Esophagus muscularis mucosa (tissue), 4 donors: ENCODE measurements at regions of chr3 and their contacts with region 1.

Region 1: DNA sequence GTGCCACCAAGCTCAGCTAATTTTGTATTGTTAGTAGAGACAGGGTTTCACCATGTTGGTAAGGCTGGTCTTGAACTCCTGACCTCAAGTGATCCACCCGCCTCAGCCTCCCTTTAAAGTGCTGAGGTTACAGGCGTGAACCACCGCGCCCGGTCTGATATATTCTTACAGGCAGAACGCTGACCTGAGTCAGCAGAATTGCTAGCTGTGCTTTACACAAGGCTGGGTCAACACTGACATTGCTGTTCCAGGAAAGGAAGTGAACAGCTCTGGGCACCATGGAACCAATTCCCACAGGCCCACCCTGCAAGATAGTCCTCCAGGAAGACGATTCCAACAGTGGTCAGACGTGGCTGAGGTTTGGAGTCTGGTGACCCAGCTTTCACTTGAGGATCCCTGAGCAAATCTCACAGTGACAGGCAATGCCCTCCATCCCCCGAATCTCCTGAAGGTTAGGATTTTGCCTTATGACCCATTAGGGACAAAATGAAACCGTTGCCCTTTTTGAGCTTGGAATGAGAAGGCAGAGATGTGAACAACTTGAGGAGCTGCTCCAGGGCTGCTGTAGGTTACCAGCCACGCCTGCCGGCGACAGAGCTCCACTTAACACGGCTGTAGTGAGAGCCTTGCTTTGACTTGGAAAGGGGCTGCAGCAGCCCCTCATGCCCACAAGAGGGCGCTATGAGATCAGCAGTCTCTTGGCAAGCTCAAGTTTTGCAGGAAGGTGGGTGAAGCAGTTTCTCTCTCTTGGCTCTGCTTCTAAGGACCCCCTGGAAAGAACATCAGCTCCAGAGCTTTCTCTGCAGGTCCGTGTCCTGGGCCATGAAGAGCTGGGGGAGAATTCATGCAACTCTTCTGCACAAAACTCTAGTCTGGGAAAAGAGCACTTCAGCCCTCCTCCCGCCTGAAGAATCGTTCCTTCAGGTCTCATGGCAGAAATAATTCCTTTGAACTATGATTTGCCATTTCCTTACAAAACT is 74.1 kb downstream of the SENP2 start:
- DNase-seq: peak; percentile 93
- H3K4me3 ChIP-seq: peak overlapping the region in 1 of 4 donors; percentile 14
- H3K27ac ChIP-seq: peak overlapping the region; percentile 81 to 86 (median 83)
- H3K4me1 ChIP-seq: peaks cover 43 to 58% (median 56%) of the 10 kb centered on the region in 4 donors
- H3K27me3 ChIP-seq: no peaks in the 10 kb centered on the region
- CTCF ChIP-seq: peak in 2 of 3 experiments; percentile 92 to 94
- EP300 ChIP-seq: no peak
- POLR2A ChIP-seq: no peak

Region 2: DNA sequence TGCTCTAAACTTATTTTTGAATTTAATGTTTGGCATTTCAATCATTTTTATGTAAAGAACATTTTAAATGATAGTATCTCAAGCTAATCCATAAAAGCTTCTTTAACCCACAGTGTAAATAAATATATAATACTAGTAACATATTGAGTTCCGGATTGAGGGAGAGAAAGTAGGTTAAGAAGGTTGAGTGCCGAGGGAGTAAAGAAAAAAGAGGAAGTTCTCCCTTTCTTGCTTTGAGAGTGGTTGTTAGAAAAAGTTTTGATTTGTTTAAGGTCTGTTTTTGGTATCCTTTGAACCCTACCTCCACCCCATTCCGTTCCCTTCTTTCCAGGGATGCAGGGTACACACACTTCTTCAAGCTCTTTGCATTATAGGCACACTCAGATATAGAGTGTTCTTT is 717.5 kb before region 1 on chr3:
- intact Hi-C with region 1: no loop called
- DNase-seq: no peak
- H3K4me3 ChIP-seq: no peak overlapping the region
- H3K27ac ChIP-seq: no peak overlapping the region
- H3K4me1 ChIP-seq: no peaks in the 10 kb centered on the region
- H3K27me3 ChIP-seq: no peaks in the 10 kb centered on the region
- CTCF ChIP-seq: no peak
- EP300 ChIP-seq: no peak
- POLR2A ChIP-seq: no peak

Region 3: DNA sequence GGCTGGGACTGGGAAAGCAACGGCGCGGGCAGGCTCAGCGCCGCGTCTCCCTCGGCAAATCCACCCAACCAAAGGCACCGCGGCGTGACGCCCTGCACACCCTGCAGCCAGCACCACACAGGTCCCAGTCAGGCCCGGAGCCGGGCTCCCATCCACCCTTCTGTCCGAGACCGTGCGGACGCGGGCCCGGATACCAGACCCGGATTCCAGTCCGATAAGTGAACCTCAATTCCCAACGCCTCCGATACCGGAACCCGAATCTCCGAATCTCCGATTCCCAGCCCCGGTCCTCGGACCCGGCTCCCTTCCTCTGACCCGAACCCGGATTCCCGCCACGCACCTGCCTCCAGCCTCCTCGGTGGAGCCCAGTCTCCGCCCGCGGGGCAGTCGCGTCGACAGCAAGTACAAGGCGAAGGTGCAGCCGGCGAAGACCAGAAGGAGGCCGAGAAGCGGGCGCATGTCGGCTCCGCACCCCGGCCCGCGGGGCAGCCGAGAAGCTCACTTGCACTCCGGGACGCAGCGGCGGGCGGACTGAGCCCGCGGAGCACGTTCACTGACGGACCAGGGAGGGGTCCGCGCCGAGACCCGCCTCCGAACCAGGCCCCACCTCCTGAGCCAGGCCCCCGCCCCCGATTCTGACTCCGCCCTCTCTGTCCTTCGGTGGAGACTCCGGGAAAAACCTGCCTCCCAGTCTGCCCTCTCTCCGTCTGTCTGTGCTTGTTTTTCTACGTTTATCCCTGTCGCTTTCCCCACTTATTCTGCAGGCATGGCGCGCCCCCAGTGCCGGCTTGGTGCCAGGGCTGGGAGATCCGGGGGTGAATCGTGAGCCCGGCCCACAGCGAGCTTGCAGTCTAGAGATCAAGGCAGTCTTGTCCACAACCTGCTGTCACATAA is 161.5 kb before region 1 on chr3 and contains the start of gene TMEM41A:
- intact Hi-C with region 1: no loop called
- DNase-seq: peak; percentile 98
- H3K4me3 ChIP-seq: peak within 1 kb of the TSS; percentile 78 to 96 (median 82)
- H3K27ac ChIP-seq: peak within 1 kb of the TSS; percentile 82 to 92 (median 88)
- H3K4me1 ChIP-seq: peaks cover 19 to 28% (median 22%) of the 10 kb centered on the region in 4 donors
- H3K27me3 ChIP-seq: peaks cover 0 to 5% (median 0%) of the 10 kb centered on the region in 4 donors
- CTCF ChIP-seq: peak in 1 of 3 experiments; percentile 7
- EP300 ChIP-seq: no peak
- POLR2A ChIP-seq: peak; percentile 53
- total RNA-seq, gene TMEM41A: 7.5 to 9.6 (median 8.3) TPM

Region 4: GRCh38 chr3:185764163-185764979 is 104.1 kb after region 1 on chr3:
- intact Hi-C with region 1: loop called (anchors 2 kb)
- DNase-seq: no peak
- H3K4me3 ChIP-seq: peak overlapping the region in 2 of 4 donors; percentile 0 to 10
- H3K27ac ChIP-seq: peak overlapping the region in 3 of 4 donors; percentile 24 to 48 (median 37)
- H3K4me1 ChIP-seq: peaks cover 10 to 25% (median 14%) of the 10 kb centered on the region in 4 donors
- H3K27me3 ChIP-seq: peaks cover 0 to 11% (median 0%) of the 10 kb centered on the region in 4 donors
- CTCF ChIP-seq: no peak
- EP300 ChIP-seq: no peak
- POLR2A ChIP-seq: no peak

Region 5: GRCh38 chr3:185937689-185938463 is 277.6 kb after region 1 on chr3 and contains the start of gene TRA2B:
- intact Hi-C with region 1: loop called (anchors 10 kb)
- DNase-seq: peak; percentile 100
- H3K4me3 ChIP-seq: peak within 1 kb of the TSS; percentile 74 to 99 (median 99)
- H3K27ac ChIP-seq: peak within 1 kb of the TSS; percentile 98 to 100 (median 100)
- H3K4me1 ChIP-seq: peaks cover 21 to 38% (median 32%) of the 10 kb centered on the region in 4 donors
- H3K27me3 ChIP-seq: no peaks in the 10 kb centered on the region
- CTCF ChIP-seq: peak; percentile 11 to 44 (median 21)
- EP300 ChIP-seq: no peak
- POLR2A ChIP-seq: peak; percentile 100
- total RNA-seq, gene TRA2B: 73.8 to 164 (median 85.1) TPM